ENCODE measurements at regions of chr13 and their contacts with region 1.

Region 1: GRCh38 chr13:45047394-45048310 is 58.3 kb downstream of the GPALPP1 start:
- DNase-seq: peak; percentile 68 to 71
- ATAC-seq: peak; percentile 97 to 98
- H3K4me3 ChIP-seq: peak overlapping the region; percentile 40
- H3K27ac ChIP-seq: peak overlapping the region in 1 of 2 experiments; percentile 58; a peak in 2 of 6 replicates
- H3K4me1 ChIP-seq: no peaks in the 10 kb centered on the region
- CTCF ChIP-seq: peak; percentile 86
- EP300 ChIP-seq: no peak
- POLR2A ChIP-seq: no peak
- RAD21 ChIP-seq: peak; percentile 96

Region 2: DNA sequence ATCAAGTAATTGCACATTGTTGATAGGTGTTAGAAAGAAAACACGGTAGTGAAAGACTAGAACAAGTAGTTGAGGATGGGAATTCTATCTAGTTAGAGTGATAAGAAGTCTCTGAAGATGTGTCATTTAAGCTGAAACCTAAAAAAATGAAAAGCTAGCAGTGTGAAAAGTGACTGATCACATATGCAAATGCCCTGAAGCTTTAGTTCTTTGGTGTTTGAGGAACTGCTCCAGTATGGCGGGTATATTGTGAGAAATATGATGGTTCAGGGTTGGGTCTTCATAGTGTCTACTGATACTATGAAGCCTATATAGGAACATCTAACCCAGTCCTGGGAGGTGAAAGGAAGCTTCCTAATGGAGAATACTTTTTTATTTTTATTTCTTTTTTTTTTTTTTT is 13.3 kb before region 1 on chr13:
- CTCF ChIA-PET with region 1: interaction called, 17 read pairs
- POLR2A ChIA-PET with region 1: no interaction called
- DNase-seq: no peak
- ATAC-seq: no peak
- H3K4me3 ChIP-seq: no peak overlapping the region
- H3K27ac ChIP-seq: no peak overlapping the region
- H3K4me1 ChIP-seq: no peaks in the 10 kb centered on the region
- CTCF ChIP-seq: no peak
- EP300 ChIP-seq: no peak
- POLR2A ChIP-seq: no peak
- RAD21 ChIP-seq: no peak

Region 3: GRCh38 chr13:45063261-45063860 is 15.7 kb after region 1 on chr13:
- CTCF ChIA-PET with region 1: interaction called, 29 read pairs
- POLR2A ChIA-PET with region 1: no interaction called
- DNase-seq: no peak
- ATAC-seq: no peak
- H3K4me3 ChIP-seq: no peak overlapping the region
- H3K27ac ChIP-seq: no peak overlapping the region
- H3K4me1 ChIP-seq: no peaks in the 10 kb centered on the region
- CTCF ChIP-seq: no peak
- EP300 ChIP-seq: no peak
- POLR2A ChIP-seq: no peak
- RAD21 ChIP-seq: no peak

Region 4: GRCh38 chr13:45297456-45298205 is 250.0 kb after region 1 on chr13:
- CTCF ChIA-PET with region 1: interaction called, 13 read pairs
- POLR2A ChIA-PET with region 1: no interaction called
- DNase-seq: no peak
- ATAC-seq: no peak
- H3K4me3 ChIP-seq: no peak overlapping the region
- H3K27ac ChIP-seq: no peak overlapping the region
- H3K4me1 ChIP-seq: no peaks in the 10 kb centered on the region
- CTCF ChIP-seq: no peak
- EP300 ChIP-seq: no peak
- POLR2A ChIP-seq: no peak
- RAD21 ChIP-seq: no peak

Region 5: GRCh38 chr13:45310341-45311125 is 262.9 kb after region 1 on chr13:
- CTCF ChIA-PET with region 1: interaction called, 61 read pairs
- POLR2A ChIA-PET with region 1: no interaction called
- DNase-seq: no peak
- ATAC-seq: peak; percentile 37 to 39; a peak in 5 of 6 replicates
- H3K4me3 ChIP-seq: peak overlapping the region; percentile 32
- H3K27ac ChIP-seq: no peak overlapping the region
- H3K4me1 ChIP-seq: peaks cover 3% of the 10 kb centered on the region; the same call in 1 of the 3 replicates
- CTCF ChIP-seq: no peak
- EP300 ChIP-seq: no peak
- POLR2A ChIP-seq: no peak
- RAD21 ChIP-seq: no peak